Activated B cell treated with CpG ODN at 0.5 μM for 24 hours (primary cell): ENCODE measurements at regions of chr9 and their contacts with region 1.

Region 1: GRCh38 chr9:107309271-107309670 is 26.2 kb downstream of the RAD23B start:
- DNase-seq: no peak
- ATAC-seq: no peak
- H3K4me3 Mint-ChIP-seq: no peak overlapping the region
- H3K27ac Mint-ChIP-seq: no peak overlapping the region
- H3K4me1 Mint-ChIP-seq: peaks cover 24% of the 10 kb centered on the region
- H3K27me3 Mint-ChIP-seq: no peaks in the 10 kb centered on the region
- CTCF ChIP-seq: no peak

Region 2: GRCh38 chr9:107260437-107261086 is 48.7 kb before region 1 on chr9:
- CTCF ChIA-PET with region 1: no interaction called
- POLR2A ChIA-PET with region 1: no interaction called
- intact Hi-C with region 1: loop called (anchors 5 kb)
- DNase-seq: peak; percentile 17
- ATAC-seq: peak; percentile 98
- H3K4me3 Mint-ChIP-seq: peak overlapping the region; percentile 53
- H3K27ac Mint-ChIP-seq: peak overlapping the region; percentile 67
- H3K4me1 Mint-ChIP-seq: peaks cover 26% of the 10 kb centered on the region
- H3K27me3 Mint-ChIP-seq: peaks cover 3% of the 10 kb centered on the region
- CTCF ChIP-seq: no peak

Region 3: DNA sequence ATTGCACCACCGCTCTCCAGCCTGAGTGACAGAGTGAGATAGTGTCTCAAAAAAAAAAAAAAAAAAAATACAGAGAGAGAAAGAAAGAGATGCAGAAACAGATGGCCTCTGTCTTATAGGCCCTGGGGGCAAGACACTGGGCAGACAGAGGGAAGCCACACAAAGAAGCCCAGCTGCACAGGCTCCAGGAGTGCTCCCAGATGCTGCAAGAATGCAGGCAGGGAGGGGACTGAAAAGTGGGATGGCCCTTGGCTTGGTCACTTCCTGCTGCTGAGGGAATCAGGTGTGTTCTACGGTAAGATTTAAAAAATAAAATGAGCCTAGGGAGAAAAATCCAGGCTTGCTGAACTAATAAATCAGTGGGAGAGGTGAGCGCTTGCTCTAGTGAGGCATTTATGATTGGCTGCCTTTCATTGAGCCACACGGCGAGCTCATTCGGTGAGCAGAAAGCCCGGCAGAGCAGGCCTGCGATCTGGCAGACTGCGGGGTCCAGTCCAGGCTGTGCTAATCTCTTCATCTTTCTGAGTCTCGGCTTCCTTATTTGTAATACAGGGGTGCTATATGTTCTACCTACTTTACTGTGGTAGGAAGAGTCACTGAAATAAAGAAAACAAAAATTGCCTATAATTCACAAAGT is 54.4 kb after region 1 on chr9:
- CTCF ChIA-PET with region 1: no interaction called
- POLR2A ChIA-PET with region 1: no interaction called
- intact Hi-C with region 1: no loop called
- DNase-seq: no peak
- ATAC-seq: no peak
- H3K4me3 Mint-ChIP-seq: no peak overlapping the region
- H3K27ac Mint-ChIP-seq: no peak overlapping the region
- H3K4me1 Mint-ChIP-seq: no peaks in the 10 kb centered on the region
- H3K27me3 Mint-ChIP-seq: peaks cover 10% of the 10 kb centered on the region
- CTCF ChIP-seq: no peak